BJ (cell line): ENCODE measurements at regions of chr10 and their contacts with region 1.

Region 1: GRCh38 chr10:128078136-128078969 is 47.9 kb downstream of the MKI67 start:
- DNase-seq: no peak
- H3K4me3 ChIP-seq: no peak overlapping the region
- H3K27me3 ChIP-seq: peaks cover 5% of the 10 kb centered on the region
- CTCF ChIP-seq: peak; percentile 93

Region 2: GRCh38 chr10:127293640-127294039 is 784.7 kb before region 1 on chr10:
- CTCF ChIA-PET with region 1: no interaction called
- POLR2A ChIA-PET with region 1: no interaction called
- DNase-seq: no peak
- H3K4me3 ChIP-seq: no peak overlapping the region
- H3K27me3 ChIP-seq: no peaks in the 10 kb centered on the region
- CTCF ChIP-seq: no peak

Region 3: GRCh38 chr10:128125944-128126764 is 47.8 kb after region 1 on chr10 and contains the start of gene MKI67:
- CTCF ChIA-PET with region 1: interaction called, 3 read pairs
- POLR2A ChIA-PET with region 1: interaction called, 14 read pairs
- DNase-seq: peak; percentile 36
- H3K4me3 ChIP-seq: peak within 1 kb of the TSS; percentile 83
- H3K27me3 ChIP-seq: no peaks in the 10 kb centered on the region
- CTCF ChIP-seq: no peak
- polyA plus RNA-seq, gene MKI67: 11.8 and 12.5 TPM in 2 replicates

Region 4: DNA sequence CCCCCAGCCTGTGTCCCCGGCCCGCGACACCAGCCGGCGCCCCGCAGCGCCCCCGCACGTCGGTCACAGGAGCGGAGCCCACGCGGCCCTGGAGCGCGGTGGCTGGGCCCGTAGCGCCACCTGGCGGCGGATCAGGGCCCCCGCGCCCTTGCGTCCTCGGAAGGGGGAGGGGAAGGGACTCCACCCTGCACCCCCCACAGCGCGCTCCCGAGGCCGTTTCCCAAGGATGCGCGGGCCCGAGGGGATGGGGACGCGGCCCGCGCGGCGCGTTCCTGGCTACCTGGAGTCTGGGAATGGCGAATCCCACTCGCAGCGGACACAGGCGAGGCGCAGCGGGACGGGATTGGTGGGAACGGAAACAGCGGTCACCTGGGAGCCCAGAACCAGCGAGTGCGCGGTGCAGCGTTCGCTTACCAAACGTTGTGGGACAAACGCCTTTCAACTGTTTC is 71.7 kb after region 1 on chr10:
- CTCF ChIA-PET with region 1: interaction called, 137 read pairs
- POLR2A ChIA-PET with region 1: no interaction called
- DNase-seq: no peak
- H3K4me3 ChIP-seq: peak overlapping the region; percentile 66
- H3K27me3 ChIP-seq: peaks cover 7% of the 10 kb centered on the region; the same call in 1 of the 2 replicates
- CTCF ChIP-seq: peak; percentile 81

Region 5: DNA sequence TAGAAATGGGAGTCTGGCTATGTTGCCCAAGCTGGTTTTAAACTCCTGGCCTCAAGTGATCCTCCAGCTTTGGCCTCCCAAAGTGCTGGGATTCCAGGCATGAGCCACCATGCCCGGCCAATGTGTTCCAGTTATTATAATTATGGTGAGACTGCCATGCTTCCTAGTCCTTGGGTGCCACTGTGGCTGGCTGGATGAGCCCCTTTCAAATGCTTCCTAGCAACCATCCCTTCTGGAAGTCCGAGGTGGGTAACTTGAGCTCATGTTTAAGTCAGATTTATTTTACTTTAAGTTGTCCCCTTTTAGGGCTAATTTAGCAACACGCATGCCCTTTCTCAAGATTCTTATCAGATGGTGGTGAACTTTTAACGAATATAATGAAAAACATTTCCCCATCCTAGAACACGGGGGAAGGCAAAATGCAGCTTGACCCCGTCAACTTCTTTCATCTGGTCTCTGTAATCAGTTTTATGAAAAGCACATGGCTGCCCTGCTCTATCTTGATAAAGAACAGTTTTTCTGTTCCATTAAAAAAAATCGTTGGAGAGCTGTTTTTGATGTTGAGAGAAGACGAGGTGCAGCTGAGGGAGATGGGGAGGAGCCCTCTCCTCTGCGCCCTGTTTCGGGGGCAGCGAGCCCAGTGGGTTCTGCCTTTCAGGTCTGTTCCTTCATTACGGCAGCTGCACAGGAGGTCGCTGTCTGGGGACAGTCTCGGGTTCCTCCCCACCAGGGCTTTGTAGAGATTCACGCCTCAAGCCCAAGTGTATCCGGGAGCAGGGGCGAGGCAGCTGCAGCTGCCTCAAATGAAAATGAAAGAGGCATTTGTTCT is 108.8 kb after region 1 on chr10:
- CTCF ChIA-PET with region 1: no interaction called
- POLR2A ChIA-PET with region 1: no interaction called
- DNase-seq: no peak
- H3K4me3 ChIP-seq: no peak overlapping the region
- H3K27me3 ChIP-seq: no peaks in the 10 kb centered on the region
- CTCF ChIP-seq: no peak